Naive thymus-derived CD4-positive, alpha-beta T cell (primary cell): ENCODE measurements at regions of chr10 and their contacts with region 1.

Region 1: DNA sequence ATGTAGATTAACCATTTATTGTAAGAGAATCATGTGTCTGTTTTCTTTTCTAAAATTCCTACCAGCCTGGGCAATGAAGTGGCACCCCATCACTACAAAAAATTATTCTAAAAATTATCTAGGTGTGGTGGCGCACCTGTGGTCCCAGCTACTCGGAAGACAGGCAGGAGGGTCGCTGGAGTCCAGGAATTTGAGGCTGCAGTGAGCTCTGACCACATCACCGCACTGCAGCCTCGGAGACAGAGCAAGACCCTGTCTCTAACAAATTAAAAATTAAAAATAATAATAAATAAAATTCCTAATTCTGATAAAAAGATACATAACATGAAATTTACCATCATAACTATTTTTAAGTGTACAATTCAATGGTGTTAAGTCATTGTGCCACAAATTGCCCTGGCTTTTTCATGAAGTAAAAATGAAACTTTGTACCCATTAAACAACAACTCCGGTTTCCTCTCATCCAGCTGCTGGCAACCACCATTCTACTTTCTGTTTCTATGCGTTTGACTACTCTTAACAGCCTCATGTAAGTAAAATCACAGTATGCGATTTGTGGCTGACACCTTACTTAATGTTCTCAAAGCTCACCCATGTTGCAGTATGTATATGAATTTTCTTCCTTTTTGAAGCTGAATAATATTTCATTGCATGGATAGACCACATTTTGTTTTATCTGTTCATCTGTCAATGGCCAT is 20.6 kb upstream of the USP6NL start:
- DNase-seq: peak in 7 of 9 donors; percentile 22 to 52 (median 37)
- ATAC-seq: peak; percentile 81
- H3K4me3 ChIP-seq: peak overlapping the region; percentile 9
- H3K4me3 Mint-ChIP-seq: peak overlapping the region; percentile 2 to 85 (median 62)
- H3K27ac ChIP-seq: no peak overlapping the region
- H3K27ac Mint-ChIP-seq: peak overlapping the region in 7 of 9 donors; percentile 64 to 80 (median 72)
- H3K4me1 ChIP-seq: peaks cover 0 to 7% of the 10 kb centered on the region in 2 donors
- H3K4me1 Mint-ChIP-seq: peaks cover 0 to 23% (median 17%) of the 10 kb centered on the region in 7 donors
- H3K27me3 ChIP-seq: no peaks in the 10 kb centered on the region
- H3K27me3 Mint-ChIP-seq: peaks cover 0 to 57% (median 0%) of the 10 kb centered on the region in 5 donors

Region 2: DNA sequence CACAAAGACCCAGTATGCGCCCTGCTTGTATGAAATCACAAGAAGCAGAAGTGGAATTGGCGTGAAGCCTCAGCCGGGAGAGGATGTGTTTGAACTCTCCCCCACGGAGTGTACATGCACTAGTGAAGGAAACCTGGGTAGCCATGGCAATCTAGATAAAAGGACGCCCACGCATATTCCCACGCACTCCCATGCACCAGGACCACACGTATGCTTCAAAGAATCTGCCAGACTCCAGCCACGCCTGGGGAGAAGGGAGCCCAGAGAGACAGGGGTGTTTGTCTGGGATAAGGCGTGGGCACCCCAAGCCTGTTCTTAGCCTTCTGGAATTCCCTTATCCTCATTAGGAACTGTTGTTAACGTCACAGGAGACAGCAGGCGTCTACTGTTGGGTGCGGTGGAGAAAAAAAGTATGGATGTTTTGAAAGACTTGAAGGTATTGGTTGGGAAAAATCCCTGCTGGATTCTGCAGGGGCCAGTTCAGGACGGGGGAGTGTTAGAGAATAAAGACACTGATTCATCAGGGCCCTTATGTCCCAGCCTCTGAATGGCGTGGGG is 81.2 kb after region 1 on chr10:
- CTCF ChIA-PET with region 1: no interaction called
- POLR2A ChIA-PET with region 1: no interaction called
- intact Hi-C with region 1: loop called in 1 of 2 experiments (anchors 2 kb)
- DNase-seq: no peak
- ATAC-seq: no peak
- H3K4me3 ChIP-seq: no peak overlapping the region
- H3K4me3 Mint-ChIP-seq: peak overlapping the region in 1 of 10 donors; percentile 7
- H3K27ac ChIP-seq: no peak overlapping the region
- H3K27ac Mint-ChIP-seq: no peak overlapping the region
- H3K4me1 ChIP-seq: peaks cover 0 to 24% of the 10 kb centered on the region in 2 donors
- H3K4me1 Mint-ChIP-seq: peaks cover 11 to 37% (median 24%) of the 10 kb centered on the region in 7 donors
- H3K27me3 ChIP-seq: no peaks in the 10 kb centered on the region
- H3K27me3 Mint-ChIP-seq: peaks cover 4 to 83% (median 6%) of the 10 kb centered on the region in 5 donors

Region 3: DNA sequence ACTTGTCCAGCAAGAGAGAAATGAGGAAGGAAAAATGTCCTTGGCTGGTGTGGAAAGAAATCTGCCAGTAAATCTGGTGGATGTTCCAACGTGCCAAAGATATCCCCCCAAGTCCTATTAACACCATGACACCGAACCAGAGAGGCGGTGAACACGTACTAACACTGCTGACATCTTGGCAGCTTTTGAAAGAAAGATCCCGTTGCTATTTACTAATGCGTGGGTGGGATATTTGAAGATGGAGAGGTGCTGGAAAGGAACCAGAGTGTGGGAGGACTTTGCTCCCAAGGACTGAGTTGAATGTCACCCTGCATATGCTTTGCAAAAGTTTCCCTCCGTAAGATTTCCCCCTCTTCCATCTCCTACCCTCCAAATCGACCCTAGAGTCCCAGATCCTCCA is 1361.6 kb after region 1 on chr10:
- CTCF ChIA-PET with region 1: no interaction called
- POLR2A ChIA-PET with region 1: no interaction called
- intact Hi-C with region 1: no loop called
- DNase-seq: no peak
- ATAC-seq: no peak
- H3K4me3 ChIP-seq: no peak overlapping the region
- H3K4me3 Mint-ChIP-seq: no peak overlapping the region
- H3K27ac ChIP-seq: no peak overlapping the region
- H3K27ac Mint-ChIP-seq: no peak overlapping the region
- H3K4me1 ChIP-seq: no peaks in the 10 kb centered on the region
- H3K4me1 Mint-ChIP-seq: no peaks in the 10 kb centered on the region
- H3K27me3 ChIP-seq: peaks cover 0 to 3% of the 10 kb centered on the region in 2 donors
- H3K27me3 Mint-ChIP-seq: peaks cover 25 to 43% (median 38%) of the 10 kb centered on the region in 5 donors